ENCODE measurements at regions of chr1 and their contacts with region 1.

Region 1: DNA sequence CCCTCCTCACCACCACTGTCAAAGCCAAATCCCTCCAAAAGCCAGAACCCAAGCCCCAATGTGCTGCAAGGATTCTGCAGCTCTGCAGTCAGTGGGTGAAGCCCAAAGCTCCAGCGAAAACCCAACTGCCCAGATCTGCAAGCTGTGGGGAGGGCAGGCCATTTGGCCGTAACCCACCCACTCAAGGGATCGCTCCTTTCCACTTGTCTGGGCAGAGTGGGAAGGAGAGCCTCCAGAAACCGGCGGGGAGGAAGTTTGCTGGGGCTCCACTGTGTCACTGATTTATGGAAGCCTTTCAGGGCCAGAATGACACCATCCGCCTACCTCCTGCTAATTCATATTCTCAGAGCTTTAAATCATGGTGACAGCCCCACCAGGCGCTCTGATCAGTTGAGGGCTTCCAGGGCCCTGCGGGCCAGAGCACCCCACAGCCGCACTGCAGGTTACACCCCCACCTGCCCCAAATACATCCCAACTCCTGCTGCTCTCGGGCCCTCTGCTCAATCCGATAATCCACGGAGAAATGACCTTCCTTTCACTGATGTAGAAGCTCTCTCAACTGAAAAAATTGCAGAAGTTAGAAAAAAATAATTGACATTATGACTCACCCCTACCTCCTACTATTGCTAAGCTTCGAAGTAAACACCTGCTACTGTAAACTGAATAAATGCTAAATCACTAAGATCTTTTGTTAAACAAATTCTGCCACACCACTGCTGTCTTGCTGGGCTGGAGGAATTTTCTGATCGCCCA is 40.6 kb upstream of the RAB4A start:
- DNase-seq: no peak
- ATAC-seq: peak; percentile 18
- H3K4me3 ChIP-seq: no peak overlapping the region
- H3K27ac ChIP-seq: peak overlapping the region; percentile 48
- H3K4me1 ChIP-seq: peaks cover 25% of the 10 kb centered on the region
- H3K27me3 ChIP-seq: no peaks in the 10 kb centered on the region
- CTCF ChIP-seq: no peak

Region 2: DNA sequence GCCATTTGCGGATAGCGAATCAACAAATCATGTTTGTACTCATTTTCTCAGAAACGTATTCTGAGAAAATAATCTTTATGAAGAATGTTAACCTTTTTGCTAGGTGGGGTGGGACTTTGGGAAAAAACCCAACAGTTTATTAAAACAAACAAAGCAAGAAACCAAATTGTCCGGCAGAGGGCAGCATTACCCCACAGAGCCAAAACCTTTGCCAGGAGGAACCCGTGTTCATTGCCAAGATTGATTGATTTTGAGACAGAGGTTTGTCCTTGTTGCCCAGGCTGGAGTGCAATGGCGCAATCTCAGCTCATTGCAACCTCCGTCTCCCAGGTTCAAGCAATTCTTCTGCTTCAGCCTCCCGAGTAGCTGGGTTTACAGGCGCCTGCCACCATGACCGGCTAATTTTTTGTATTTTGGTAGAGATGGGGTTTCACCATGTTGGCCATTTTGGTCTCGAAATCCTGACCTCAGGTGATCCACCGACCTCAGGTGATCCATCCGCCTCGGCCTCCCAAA is 565.9 kb before region 1 on chr1:
- intact Hi-C with region 1: loop called (anchors 10 kb)
- DNase-seq: peak; percentile 73
- ATAC-seq: peak; percentile 86
- H3K4me3 ChIP-seq: no peak overlapping the region
- H3K27ac ChIP-seq: no peak overlapping the region
- H3K4me1 ChIP-seq: no peaks in the 10 kb centered on the region
- H3K27me3 ChIP-seq: no peaks in the 10 kb centered on the region
- CTCF ChIP-seq: peak; percentile 86